ENCODE measurements at regions of chr2 and their contacts with region 1.

Region 1: DNA sequence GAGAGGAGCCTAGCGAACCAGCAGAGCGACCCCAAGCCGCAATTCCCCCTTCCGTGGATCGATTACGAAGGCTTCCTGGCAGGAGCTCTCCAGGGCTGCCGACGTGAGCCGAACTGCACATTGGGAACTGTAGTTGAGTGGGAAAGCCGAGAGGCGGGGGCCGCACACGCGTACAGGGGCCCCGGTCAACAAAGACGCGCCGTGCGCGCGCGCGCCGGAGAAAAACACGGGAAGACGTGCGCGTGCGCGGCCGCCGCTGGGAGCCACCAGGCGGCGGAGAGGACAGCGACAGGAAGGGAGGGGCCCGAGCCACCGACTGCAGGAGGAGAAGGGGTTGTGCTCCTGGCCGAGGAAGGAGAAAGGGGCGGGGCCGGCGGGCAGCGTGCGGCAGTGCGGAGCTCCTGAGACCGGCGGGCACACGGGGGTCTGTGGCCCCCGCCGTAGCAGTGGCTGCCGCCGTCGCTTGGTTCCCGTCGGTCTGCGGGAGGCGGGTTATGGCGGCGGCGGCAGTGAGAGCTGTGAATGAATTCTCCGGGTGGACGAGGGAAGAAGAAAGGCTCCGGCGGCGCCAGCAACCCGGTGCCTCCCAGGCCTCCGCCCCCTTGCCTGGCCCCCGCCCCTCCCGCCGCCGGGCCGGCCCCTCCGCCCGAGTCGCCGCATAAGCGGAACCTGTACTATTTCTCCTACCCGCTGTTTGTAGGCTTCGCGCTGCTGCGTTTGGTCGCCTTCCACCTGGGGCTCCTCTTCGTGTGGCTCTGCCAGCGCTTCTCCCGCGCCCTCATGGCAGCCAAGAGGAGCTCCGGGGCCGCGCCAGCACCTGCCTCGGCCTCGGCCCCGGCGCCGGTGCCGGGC is at the start of gene SPAST:
- H3K4me3 ChIP-seq: peak within 1 kb of the TSS; percentile 89
- H3K27ac ChIP-seq: peak within 1 kb of the TSS; percentile 81
- H3K4me1 ChIP-seq: no peaks in the 10 kb centered on the region; the same call in 1 of the 2 replicates
- CTCF ChIP-seq: peak; percentile 91

Region 2: DNA sequence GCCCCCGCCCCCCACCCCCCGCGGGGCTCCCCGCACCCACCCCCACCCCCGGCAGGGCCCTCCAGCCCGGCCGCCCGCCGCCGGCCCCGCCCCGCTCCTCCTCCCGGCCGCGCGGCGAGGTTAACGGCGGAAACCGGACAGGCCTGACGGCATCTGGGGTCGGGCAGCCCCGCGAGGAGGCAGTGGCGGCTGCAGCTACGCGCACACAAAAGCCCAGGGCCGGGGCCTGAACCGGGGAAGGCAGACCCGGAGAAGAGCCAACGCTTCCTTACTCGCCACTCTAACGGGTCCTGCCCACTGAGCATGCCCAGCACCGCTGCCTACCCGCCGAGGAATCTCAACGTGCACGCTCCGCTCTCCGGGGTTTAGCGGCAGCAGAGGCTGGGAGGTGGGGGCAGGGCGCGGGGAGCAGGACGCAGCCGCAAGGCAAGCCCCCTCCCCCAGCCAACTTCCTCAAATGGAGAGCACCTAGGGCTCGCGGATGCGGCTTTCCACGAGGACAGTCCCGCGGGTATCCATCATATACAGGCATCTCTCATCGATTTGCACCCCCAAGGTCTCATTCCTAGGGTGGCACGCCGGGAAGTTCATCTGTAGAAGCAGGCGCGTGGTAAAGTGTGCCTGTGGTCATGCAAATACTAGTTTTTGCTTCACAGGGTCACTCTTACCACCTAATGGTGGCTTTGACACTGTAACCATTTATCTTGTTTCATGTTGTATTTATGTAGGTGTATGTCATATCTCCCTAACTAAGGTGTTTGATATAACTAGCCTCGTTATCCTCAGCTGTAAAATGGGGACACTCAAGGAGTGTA is 52.7 kb before region 1 on chr2 and contains the start of gene MEMO1:
- CTCF ChIA-PET with region 1: interaction called, 5 read pairs
- POLR2A ChIA-PET with region 1: interaction called, 10 read pairs
- H3K4me3 ChIP-seq: peak within 1 kb of the TSS; percentile 90
- H3K27ac ChIP-seq: peak within 1 kb of the TSS; percentile 86
- H3K4me1 ChIP-seq: no peaks in the 10 kb centered on the region
- CTCF ChIP-seq: peak; percentile 69

Region 3: GRCh38 chr2:32039447-32040219 is 23.9 kb before region 1 on chr2 and contains the start of gene DPY30:
- CTCF ChIA-PET with region 1: no interaction called
- POLR2A ChIA-PET with region 1: interaction called, 104 read pairs
- H3K4me3 ChIP-seq: peak within 1 kb of the TSS; percentile 82
- H3K27ac ChIP-seq: peak within 1 kb of the TSS; percentile 74
- H3K4me1 ChIP-seq: no peaks in the 10 kb centered on the region
- CTCF ChIP-seq: peak; percentile 72

Region 4: GRCh38 chr2:32074134-32074506 is 10.6 kb after region 1 on chr2:
- CTCF ChIA-PET with region 1: interaction called, 4 read pairs
- POLR2A ChIA-PET with region 1: interaction called, 10 read pairs
- H3K4me3 ChIP-seq: no peak overlapping the region
- H3K27ac ChIP-seq: no peak overlapping the region
- H3K4me1 ChIP-seq: no peaks in the 10 kb centered on the region
- CTCF ChIP-seq: no peak

Region 5: GRCh38 chr2:32166115-32166574 is 102.6 kb after region 1 on chr2:
- CTCF ChIA-PET with region 1: interaction called, 3 read pairs
- POLR2A ChIA-PET with region 1: interaction called, 38 read pairs
- H3K4me3 ChIP-seq: peak overlapping the region; percentile 80
- H3K27ac ChIP-seq: 0 out of 2 replicates have a peak overlapping the region, but pooled peaks have one; percentile 12
- H3K4me1 ChIP-seq: no peaks in the 10 kb centered on the region
- CTCF ChIP-seq: no peak

Measured in HEK293 (cell line).